Left lung (tissue), 14 donors: ENCODE measurements at regions of chr4 and their contacts with region 1.

Region 1: DNA sequence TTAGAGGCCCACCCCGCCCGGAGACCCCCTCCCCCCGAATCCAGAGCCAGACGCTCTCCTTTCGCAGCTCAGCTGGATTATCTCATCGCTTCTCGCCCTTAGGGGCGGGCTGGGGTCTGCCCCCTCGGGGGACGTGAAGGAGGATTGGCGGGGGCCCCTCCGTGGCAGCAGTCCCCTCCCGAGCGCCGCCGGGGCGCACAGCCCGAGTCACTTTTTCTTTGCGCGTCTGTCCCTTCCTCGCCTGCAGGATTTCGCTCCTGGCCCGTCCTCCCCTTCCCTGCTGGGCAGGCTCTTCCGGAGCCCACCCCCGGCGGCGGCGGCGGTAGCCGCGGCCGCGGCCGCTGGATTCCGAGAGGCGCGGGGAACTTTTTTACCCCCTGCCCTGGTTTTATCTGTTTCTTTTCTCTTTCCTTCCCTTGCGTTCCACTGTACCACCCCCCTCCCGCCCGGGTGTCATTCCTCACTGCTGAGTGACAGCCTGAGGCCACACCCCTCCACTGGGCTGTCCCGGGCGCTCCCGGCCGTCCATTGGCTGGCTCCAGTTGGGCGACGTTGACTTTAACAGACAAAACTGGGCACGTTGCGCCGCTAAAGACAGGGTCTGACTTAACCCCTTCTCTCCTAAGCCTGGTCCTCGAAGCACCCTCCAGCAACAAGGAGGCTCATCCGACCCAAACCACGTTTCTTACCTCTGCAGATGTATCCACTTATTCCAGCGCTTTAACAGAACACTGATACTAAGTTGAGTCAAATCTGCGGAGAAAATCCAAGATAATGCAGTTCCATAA is 492 bp upstream of the NKX3-2 start:
- DNase-seq: peak; percentile 71 to 86 (median 78)
- ATAC-seq: peak; percentile 85
- H3K4me3 ChIP-seq: peak overlapping the region; percentile 51 to 52
- H3K27ac ChIP-seq: no peak overlapping the region
- H3K4me1 ChIP-seq: peaks cover 8 to 48% of the 10 kb centered on the region in 2 donors
- H3K27me3 ChIP-seq: peaks cover 100% of the 10 kb centered on the region in 2 donors
- CTCF ChIP-seq: no peak

Region 2: DNA sequence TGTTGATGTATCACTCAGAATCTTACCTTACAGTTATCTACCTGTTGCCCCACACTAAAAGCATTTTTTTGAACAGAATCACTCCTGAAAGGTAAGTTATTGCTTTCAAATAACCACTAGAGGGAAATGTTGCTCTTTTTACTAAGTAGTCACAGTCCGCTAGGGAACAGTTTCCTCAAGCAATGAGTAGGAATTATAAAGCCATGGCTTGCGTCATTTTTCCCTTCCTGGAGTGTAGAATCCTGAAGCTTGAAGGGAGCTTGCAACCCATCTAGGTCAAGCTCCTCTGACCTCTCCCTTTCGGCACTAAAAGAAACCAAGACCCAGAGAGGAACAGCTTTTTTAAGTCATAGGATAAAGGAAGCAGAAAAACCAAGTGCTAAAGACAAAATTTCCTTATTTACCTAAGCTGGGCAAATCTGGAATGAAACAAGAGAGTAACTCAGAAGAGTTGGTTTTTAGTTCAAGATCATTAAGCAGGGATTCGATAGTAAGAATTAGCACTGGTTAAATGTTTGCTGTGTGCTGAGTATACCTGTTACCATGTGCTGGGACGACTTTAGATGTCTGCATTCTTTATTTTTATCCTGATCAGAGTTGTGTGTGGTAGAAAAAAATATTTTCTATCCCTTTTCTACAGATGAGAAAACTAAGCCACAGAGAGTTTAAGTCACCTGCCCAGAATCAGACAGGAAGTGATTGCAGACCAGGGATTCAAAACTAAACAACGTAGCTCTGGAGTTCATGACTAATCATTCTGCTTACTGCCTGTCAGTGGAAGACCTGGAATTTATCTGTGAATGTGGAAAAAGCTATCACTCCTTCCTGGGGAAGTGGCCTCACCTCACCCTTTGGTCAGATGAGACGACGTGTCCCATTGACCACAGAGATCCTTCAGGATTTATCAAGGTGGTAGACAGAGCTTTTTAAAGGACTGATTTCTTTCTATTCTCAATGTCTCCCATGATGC is 692.2 kb before region 1 on chr4:
- intact Hi-C with region 1: loop called in 1 of 2 experiments (anchors 5 kb)
- DNase-seq: peak in 2 of 4 donors; percentile 34 to 59
- ATAC-seq: peak; percentile 82
- H3K4me3 ChIP-seq: no peak overlapping the region
- H3K27ac ChIP-seq: no peak overlapping the region
- H3K4me1 ChIP-seq: no peaks in the 10 kb centered on the region
- H3K27me3 ChIP-seq: peaks cover 0 to 11% of the 10 kb centered on the region in 2 donors
- CTCF ChIP-seq: peak; percentile 21 to 29

Region 3: DNA sequence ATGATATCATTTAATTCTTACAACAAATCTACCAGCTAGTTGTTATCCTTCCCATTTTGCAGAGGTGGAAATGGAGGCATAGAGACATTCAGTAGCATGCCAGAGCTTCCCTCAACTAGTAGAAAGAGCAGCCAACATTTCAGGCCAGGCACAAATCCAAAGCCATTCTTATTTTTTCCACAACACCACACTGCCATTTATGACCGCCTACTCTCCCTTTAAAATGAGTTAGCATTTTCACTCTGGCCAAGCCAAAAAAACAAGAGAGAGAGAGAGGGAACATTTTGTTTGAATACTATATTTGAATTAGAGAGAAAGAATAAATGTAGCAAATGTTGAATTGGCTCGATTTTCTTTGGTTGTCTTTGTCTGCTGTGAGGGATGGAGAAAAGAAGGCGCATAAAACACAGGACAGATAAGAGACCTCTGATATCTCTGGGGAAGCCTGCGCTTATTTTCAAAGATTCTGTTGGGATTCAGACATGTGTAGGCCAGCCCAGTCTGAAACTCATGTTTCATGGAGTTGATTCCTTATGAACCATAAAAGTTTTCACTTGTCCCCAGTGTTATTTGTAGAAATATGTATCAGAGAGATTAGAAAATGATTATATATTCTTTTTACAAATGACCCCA is 326.4 kb before region 1 on chr4:
- intact Hi-C with region 1: no loop called
- DNase-seq: peak in 2 of 4 donors; percentile 31 to 47
- ATAC-seq: peak; percentile 37
- H3K4me3 ChIP-seq: no peak overlapping the region
- H3K27ac ChIP-seq: peak overlapping the region in 1 of 2 donors; percentile 4
- H3K4me1 ChIP-seq: no peaks in the 10 kb centered on the region
- H3K27me3 ChIP-seq: no peaks in the 10 kb centered on the region
- CTCF ChIP-seq: no peak

Region 4: GRCh38 chr4:13240066-13240465 is 304.7 kb before region 1 on chr4:
- intact Hi-C with region 1: no loop called
- DNase-seq: no peak
- ATAC-seq: no peak
- H3K4me3 ChIP-seq: no peak overlapping the region
- H3K27ac ChIP-seq: no peak overlapping the region
- H3K4me1 ChIP-seq: no peaks in the 10 kb centered on the region
- H3K27me3 ChIP-seq: no peaks in the 10 kb centered on the region
- CTCF ChIP-seq: no peak